Activated CD4-positive, alpha-beta T cell treated with anti-CD3 and anti-CD28 coated beads for 36 hours (primary cell): ENCODE measurements at regions of chr3 and their contacts with region 1.

Region 1: DNA sequence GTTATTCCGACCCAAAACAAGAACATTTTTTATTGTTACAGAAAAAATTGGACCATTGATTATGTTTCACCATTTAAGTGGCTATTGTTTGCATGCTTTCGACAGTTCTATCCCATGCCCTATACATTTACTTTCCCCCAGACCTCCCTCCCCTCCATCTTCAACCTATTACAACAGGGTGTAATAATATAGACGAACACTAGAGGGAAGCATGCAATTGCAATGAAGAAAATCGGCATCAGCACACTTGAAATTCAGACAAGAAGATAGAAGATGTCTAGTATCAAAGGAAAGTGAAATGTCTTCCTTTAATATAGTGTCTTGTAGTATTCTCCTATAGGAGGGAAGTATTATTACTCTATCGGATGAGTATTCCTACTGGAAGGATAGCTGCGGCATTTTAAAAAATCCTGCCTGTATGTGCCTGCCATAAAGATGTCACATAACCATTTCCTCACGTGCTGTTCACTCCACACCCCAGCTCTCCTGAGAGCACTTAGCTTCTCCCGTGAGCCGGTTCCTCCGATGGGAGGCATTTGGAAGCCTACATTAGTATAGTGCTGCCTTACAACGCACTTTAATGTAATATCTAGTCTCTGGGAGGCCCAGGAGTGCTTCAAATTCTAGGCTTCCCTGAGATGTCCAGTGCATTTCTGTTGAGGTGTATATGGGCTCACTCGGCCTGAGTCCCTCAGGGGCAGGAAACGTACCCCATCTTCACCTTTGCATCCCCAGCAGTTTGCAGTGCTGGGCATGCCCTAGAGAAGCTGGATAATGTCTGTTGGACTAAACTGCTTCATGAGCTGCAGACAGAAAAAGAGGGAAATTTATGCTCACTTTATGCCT is 17.8 kb upstream of the ERICH6 start:
- DNase-seq: no peak
- ATAC-seq: peak; percentile 64
- H3K4me3 Mint-ChIP-seq: no peak overlapping the region
- H3K27ac Mint-ChIP-seq: no peak overlapping the region
- H3K4me1 Mint-ChIP-seq: peaks cover 29% of the 10 kb centered on the region
- H3K27me3 Mint-ChIP-seq: no peaks in the 10 kb centered on the region

Region 2: DNA sequence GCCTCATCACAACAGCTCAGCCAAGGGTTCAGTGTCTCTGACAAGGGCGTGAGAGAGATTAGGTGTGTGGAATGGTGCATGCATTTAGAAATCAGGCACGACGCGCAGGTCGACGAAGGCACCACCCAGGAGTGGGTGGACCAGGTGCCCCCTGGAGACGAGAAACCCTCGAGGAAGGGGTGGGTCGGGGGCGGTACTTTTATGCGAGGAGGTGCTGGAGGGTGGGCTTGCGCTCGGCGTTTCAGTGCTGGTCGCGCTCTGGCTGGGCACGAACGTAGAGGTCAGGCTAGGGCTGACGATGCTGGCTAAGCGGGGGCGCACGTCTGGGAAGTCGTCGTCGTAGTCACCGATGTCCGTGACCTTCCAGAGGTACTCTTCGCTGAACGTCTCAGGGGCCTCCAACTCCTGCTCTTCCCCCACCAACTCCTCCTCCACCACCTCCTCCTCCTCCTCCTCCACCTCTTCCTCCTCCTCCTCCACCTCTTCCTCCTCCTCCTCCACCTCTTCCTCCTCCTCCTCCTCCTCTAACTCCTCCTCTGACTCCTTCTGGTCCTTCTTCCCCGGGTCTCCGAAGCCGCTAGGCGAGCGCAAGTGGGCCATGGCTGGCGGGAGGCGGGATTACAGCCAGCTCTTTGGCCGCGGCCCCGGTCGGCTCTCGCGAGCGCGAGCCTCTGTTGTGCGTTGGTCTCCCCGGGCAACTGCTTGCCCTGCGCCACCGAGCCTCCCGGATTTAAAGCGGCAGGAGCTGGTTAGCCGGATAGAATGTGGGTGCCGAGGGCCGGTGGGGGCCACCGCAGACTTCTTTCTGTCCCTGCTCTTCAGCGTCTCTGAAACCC is 18.0 kb before region 1 on chr3 and contains the start of gene ERICH6:
- CTCF ChIA-PET with region 1: interaction called, 15 read pairs
- POLR2A ChIA-PET with region 1: no interaction called
- intact Hi-C with region 1: no loop called
- DNase-seq: peak; percentile 93
- ATAC-seq: peak; percentile 96
- H3K4me3 Mint-ChIP-seq: peak within 1 kb of the TSS; percentile 87
- H3K27ac Mint-ChIP-seq: peak within 1 kb of the TSS; percentile 91
- H3K4me1 Mint-ChIP-seq: peaks cover 31% of the 10 kb centered on the region
- H3K27me3 Mint-ChIP-seq: no peaks in the 10 kb centered on the region
- total RNA-seq, gene ERICH6: 0.58 TPM in 1 of 2 experiments, not detected in the other

Region 3: GRCh38 chr3:150775091-150775501 is 53.6 kb after region 1 on chr3:
- CTCF ChIA-PET with region 1: interaction called, 21 read pairs
- POLR2A ChIA-PET with region 1: interaction called, 4 read pairs
- intact Hi-C with region 1: no loop called
- DNase-seq: no peak
- ATAC-seq: no peak
- H3K4me3 Mint-ChIP-seq: no peak overlapping the region
- H3K27ac Mint-ChIP-seq: no peak overlapping the region
- H3K4me1 Mint-ChIP-seq: no peaks in the 10 kb centered on the region
- H3K27me3 Mint-ChIP-seq: no peaks in the 10 kb centered on the region

Region 4: DNA sequence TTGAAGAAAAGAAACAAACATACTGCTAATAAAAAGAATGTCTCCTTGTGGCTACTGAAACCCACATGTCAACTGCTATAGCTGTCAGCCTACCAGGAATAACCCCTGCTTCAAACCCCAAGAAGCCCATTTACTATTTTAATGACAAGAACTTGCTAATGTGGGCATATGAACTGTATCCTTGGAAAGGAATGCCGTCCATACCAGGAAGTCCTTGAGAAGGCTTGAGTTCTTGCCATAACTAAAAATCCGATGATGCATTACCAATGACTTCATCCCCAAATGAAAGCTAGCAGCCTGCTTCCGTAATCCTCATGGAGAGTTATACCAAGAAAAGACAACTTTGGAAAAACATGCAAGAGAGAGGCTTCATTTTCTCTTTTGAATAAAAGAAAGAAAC is 148.9 kb after region 1 on chr3:
- CTCF ChIA-PET with region 1: interaction called, 15 read pairs
- POLR2A ChIA-PET with region 1: no interaction called
- intact Hi-C with region 1: loop called (anchors 1 kb)
- DNase-seq: no peak
- ATAC-seq: no peak
- H3K4me3 Mint-ChIP-seq: no peak overlapping the region
- H3K27ac Mint-ChIP-seq: no peak overlapping the region
- H3K4me1 Mint-ChIP-seq: peaks cover 2% of the 10 kb centered on the region
- H3K27me3 Mint-ChIP-seq: peaks cover 15% of the 10 kb centered on the region

Region 5: DNA sequence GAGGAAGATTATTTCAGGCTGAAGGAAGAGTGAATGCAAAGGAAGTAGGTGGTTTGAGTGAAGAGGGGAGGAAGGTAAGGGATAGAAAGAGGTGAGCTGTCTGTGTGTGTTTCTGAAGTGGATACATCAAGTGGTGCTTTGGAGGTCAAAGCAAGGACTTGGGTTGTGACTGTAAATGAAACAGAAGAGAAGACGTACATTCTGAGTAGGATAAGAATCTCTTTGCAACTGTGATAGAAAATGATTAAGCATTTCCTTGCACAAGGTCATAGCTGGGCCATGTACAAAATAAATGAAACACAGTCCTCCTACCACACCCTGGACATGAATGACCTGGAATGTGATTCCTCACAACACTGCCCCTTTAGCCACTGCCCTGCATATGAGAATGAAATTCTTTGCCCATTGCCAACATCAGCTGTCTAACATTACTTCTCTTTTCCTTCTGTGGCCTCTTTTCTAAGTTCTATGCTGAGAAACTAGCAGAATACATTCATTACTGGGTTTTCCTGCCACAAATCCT is 212.0 kb after region 1 on chr3:
- CTCF ChIA-PET with region 1: no interaction called
- POLR2A ChIA-PET with region 1: no interaction called
- intact Hi-C with region 1: no loop called
- DNase-seq: no peak
- ATAC-seq: peak; percentile 44
- H3K4me3 Mint-ChIP-seq: no peak overlapping the region
- H3K27ac Mint-ChIP-seq: no peak overlapping the region
- H3K4me1 Mint-ChIP-seq: no peaks in the 10 kb centered on the region
- H3K27me3 Mint-ChIP-seq: peaks cover 22% of the 10 kb centered on the region

Region 6: DNA sequence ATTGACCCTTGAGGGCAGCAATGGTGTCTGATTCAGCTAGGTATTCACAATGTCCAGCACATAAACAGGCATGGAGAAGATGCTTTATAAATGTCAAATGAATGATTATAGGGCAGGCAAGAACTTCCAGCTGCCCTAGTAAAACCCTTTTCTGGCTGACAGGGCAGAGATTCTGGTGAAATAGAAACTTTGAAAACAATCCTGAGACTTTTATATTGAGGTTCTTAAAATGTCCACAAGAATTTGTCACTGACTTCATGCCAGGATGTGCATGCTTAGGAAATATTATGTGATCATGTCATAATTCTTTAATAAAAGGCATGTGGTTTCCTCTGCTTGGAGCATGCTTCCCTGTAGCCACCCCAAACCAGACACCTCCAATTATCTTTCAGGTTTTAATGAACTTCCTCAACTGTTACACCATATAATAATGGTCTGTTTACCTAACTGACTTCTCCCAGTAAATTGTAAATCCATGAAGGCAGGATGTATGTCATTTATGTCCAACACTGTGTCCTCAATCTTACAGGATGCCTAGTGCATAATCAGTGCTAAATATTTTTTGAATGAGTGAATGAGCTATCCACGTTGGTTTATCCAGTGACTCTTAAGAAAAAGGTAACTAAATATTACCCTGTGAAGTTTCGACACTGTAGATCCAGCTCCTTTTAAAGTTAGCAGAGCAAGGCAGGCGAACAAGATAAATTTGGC is 294.4 kb after region 1 on chr3:
- CTCF ChIA-PET with region 1: no interaction called
- POLR2A ChIA-PET with region 1: no interaction called
- intact Hi-C with region 1: no loop called
- DNase-seq: no peak
- ATAC-seq: no peak
- H3K4me3 Mint-ChIP-seq: no peak overlapping the region
- H3K27ac Mint-ChIP-seq: no peak overlapping the region
- H3K4me1 Mint-ChIP-seq: no peaks in the 10 kb centered on the region
- H3K27me3 Mint-ChIP-seq: peaks cover 3% of the 10 kb centered on the region

Region 7: GRCh38 chr3:151086484-151087456 is 365.3 kb after region 1 on chr3:
- CTCF ChIA-PET with region 1: interaction called, 7 read pairs
- POLR2A ChIA-PET with region 1: no interaction called
- intact Hi-C with region 1: loop called in 1 of 2 experiments (anchors 5 kb)
- DNase-seq: peak; percentile 89
- ATAC-seq: peak; percentile 91
- H3K4me3 Mint-ChIP-seq: peak overlapping the region; percentile 77
- H3K27ac Mint-ChIP-seq: peak overlapping the region; percentile 13
- H3K4me1 Mint-ChIP-seq: peaks cover 10% of the 10 kb centered on the region
- H3K27me3 Mint-ChIP-seq: peaks cover 36% of the 10 kb centered on the region